ENCODE measurements at regions of chr1 and their contacts with region 1.

Region 1: GRCh38 chr1:55277377-55278130 is 62.4 kb upstream of the USP24 start:
- DNase-seq: peak; percentile 59 to 76
- H3K4me3 ChIP-seq: no peak overlapping the region
- H3K27ac ChIP-seq: no peak overlapping the region
- H3K4me1 ChIP-seq: no peaks in the 10 kb centered on the region
- H3K27me3 ChIP-seq: no peaks in the 10 kb centered on the region
- CTCF ChIP-seq: peak; percentile 79 to 92 (median 86)
- POLR2A ChIP-seq: no peak

Region 2: DNA sequence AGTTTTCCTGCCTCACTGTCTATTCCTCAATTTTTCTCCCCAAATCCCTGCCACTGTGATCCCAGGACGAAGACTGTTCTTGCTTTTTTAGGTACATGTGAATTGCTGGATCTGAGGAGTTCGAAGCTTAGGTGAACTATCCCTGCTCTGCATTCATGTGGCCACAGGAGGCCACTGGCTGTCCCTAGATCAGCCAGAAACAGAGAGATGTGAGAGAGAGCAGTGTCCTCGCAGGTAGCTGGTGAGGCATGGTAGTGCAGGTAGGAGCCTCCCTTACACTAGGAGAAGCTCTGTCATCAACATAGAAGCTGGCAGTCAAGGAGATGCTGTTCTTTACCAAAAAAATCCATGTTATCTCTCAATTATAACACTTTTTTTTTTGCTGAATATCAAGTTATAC is 133.9 kb before region 1 on chr1:
- intact Hi-C with region 1: loop called (anchors 2 kb)
- DNase-seq: no peak
- H3K4me3 ChIP-seq: no peak overlapping the region
- H3K27ac ChIP-seq: no peak overlapping the region
- H3K4me1 ChIP-seq: no peaks in the 10 kb centered on the region
- H3K27me3 ChIP-seq: no peaks in the 10 kb centered on the region
- CTCF ChIP-seq: peak in 1 of 3 donors; percentile 18
- POLR2A ChIP-seq: no peak

Region 3: GRCh38 chr1:55252987-55253589 is 24.5 kb before region 1 on chr1:
- intact Hi-C with region 1: no loop called
- DNase-seq: no peak
- H3K4me3 ChIP-seq: no peak overlapping the region
- H3K27ac ChIP-seq: no peak overlapping the region
- H3K4me1 ChIP-seq: peaks cover 0 to 7% of the 10 kb centered on the region in 2 donors
- H3K27me3 ChIP-seq: no peaks in the 10 kb centered on the region
- CTCF ChIP-seq: no peak
- POLR2A ChIP-seq: no peak

Region 4: DNA sequence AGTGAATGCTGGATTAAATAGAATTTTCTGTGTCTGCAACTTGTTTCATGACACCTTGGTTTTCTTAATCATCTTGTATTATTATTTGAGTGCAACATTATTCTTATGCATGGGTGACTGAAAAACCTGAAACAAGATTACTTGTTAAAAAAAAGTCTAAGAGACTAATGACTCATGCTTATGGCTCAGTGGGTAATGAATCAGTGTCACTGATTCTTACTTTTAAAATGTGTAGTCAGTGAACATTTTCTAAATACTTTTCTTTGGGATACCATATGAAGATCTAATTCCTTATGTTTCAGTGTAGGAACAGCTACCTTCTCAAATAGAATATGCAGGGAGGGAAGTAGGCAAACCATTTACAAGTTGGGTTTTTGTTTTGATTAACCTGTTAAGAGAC is 1433.1 kb after region 1 on chr1:
- intact Hi-C with region 1: loop called (anchors 5 kb)
- DNase-seq: no peak
- H3K4me3 ChIP-seq: no peak overlapping the region
- H3K27ac ChIP-seq: no peak overlapping the region
- H3K4me1 ChIP-seq: no peaks in the 10 kb centered on the region
- H3K27me3 ChIP-seq: no peaks in the 10 kb centered on the region
- CTCF ChIP-seq: no peak
- POLR2A ChIP-seq: no peak

Measured in breast epithelium (tissue), 4 donors.